Psoas muscle (tissue), 8 donors: ENCODE measurements at regions of chr12 and their contacts with region 1.

Region 1: DNA sequence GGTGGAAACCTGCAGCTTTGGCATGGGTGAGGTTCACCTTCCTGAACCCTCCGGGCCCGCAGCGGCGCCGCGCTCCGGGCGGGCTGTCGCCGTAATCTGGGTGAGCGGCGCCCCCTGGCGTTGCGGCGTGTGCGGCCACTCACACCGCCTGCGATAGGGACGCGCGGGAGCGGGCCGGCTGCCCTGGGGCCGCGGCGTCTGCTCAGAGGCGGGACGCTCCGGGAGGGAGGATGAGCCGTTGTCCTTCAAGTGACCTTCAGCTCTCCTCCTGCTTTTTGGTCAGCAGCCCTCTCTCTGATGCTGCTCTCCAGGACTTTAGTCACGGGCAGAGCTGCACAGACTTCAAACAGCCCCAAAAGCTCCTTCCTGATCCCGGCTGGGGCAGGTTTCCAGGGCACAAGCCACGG is 211.7 kb upstream of the FKBP4 start:
- DNase-seq: peak; percentile 74 to 77
- ATAC-seq: peak; percentile 88 to 93 (median 90)
- H3K4me3 ChIP-seq: no peak overlapping the region
- H3K27ac ChIP-seq: no peak overlapping the region
- H3K4me1 ChIP-seq: peaks cover 7% of the 10 kb centered on the region
- H3K27me3 ChIP-seq: peaks cover 0 to 55% (median 3%) of the 10 kb centered on the region in 3 donors
- CTCF ChIP-seq: peak; percentile 92

Region 2: GRCh38 chr12:2057041-2057794 is 525.9 kb before region 1 on chr12:
- intact Hi-C with region 1: loop called (anchors 1 to 5 kb)
- DNase-seq: peak; percentile 53 to 77
- ATAC-seq: peak; percentile 34 to 55 (median 46)
- H3K4me3 ChIP-seq: no peak overlapping the region
- H3K27ac ChIP-seq: no peak overlapping the region
- H3K4me1 ChIP-seq: no peaks in the 10 kb centered on the region
- H3K27me3 ChIP-seq: peaks cover 2 to 49% (median 19%) of the 10 kb centered on the region in 3 donors
- CTCF ChIP-seq: peak; percentile 64

Region 3: DNA sequence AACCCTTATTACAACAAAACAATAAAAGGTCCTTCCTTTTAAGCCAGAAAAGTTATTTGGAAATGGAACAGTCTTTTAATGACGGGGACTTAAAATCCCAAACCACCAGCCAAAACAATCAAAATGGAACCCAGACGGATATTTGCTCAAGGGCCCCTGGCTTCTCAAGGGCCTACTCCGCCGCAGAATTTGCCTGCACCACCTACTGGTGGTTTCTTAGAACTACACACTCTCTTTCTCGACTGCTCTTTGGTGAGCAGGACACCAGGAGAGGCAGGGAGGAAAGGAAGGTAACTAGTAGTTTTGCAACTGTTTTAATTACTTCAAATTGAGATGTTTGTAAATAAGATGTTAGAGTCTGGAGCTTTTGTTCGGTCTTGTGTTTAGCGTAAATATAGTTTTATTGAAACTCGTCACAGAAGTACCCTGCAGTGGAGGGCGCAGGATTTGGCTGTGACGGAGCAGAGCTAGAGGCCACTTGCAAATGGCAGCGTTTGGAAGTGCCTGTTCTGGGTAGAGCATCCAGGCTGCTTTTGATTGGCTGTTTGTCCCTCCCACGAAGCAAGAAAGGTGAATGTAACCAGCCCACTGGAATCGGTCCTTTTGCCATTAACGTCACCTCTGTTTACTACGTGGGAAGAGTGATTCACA is 291.8 kb before region 1 on chr12:
- intact Hi-C with region 1: loop called in 1 of 2 experiments (anchors 10 kb)
- DNase-seq: no peak
- ATAC-seq: peak in 1 of 4 donors; percentile 47
- H3K4me3 ChIP-seq: no peak overlapping the region
- H3K27ac ChIP-seq: no peak overlapping the region
- H3K4me1 ChIP-seq: no peaks in the 10 kb centered on the region
- H3K27me3 ChIP-seq: peaks cover 0 to 6% (median 2%) of the 10 kb centered on the region in 3 donors
- CTCF ChIP-seq: peak; percentile 69

Region 4: GRCh38 chr12:2301531-2302461 is 281.3 kb before region 1 on chr12:
- intact Hi-C with region 1: loop called (anchors 10 kb)
- DNase-seq: no peak
- ATAC-seq: no peak
- H3K4me3 ChIP-seq: no peak overlapping the region
- H3K27ac ChIP-seq: no peak overlapping the region
- H3K4me1 ChIP-seq: no peaks in the 10 kb centered on the region
- H3K27me3 ChIP-seq: peaks cover 0 to 2% (median 0%) of the 10 kb centered on the region in 3 donors
- CTCF ChIP-seq: no peak